ENCODE measurements at regions of chr5 and their contacts with region 1.

Region 1: GRCh38 chr5:142551338-142552067 is 134.4 kb downstream of the FGF1 start:
- DNase-seq: no peak
- ATAC-seq: no peak
- H3K4me3 Mint-ChIP-seq: no peak overlapping the region
- H3K27ac Mint-ChIP-seq: no peak overlapping the region
- H3K4me1 Mint-ChIP-seq: peaks cover 12% of the 10 kb centered on the region
- H3K27me3 Mint-ChIP-seq: peaks cover 29% of the 10 kb centered on the region
- CTCF ChIP-seq: no peak

Region 2: DNA sequence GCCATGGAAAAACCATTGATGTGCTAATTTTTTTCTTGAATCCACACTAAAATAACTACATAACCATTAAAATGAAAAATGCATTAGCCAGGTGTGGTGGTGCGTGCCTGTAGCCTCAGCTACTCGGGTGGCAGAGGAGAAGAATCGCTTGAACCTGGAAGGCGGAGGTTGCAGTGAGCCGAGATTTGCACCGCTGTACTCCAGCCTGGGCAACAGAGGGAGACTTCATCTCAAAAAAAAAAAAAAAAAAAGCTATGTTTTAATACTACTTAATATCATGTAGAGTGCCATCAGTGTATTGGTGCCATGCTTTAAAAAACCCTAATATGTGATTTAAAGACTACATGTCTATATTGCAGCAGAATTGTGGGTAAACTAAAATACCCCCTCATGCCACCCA is 384.0 kb before region 1 on chr5:
- CTCF ChIA-PET with region 1: no interaction called
- POLR2A ChIA-PET with region 1: no interaction called
- intact Hi-C with region 1: loop called (anchors 10 kb)
- DNase-seq: no peak
- ATAC-seq: no peak
- H3K4me3 Mint-ChIP-seq: no peak overlapping the region
- H3K27ac Mint-ChIP-seq: no peak overlapping the region
- H3K4me1 Mint-ChIP-seq: no peaks in the 10 kb centered on the region
- H3K27me3 Mint-ChIP-seq: no peaks in the 10 kb centered on the region
- CTCF ChIP-seq: no peak

Region 3: GRCh38 chr5:142263346-142263745 is 288.2 kb before region 1 on chr5:
- CTCF ChIA-PET with region 1: no interaction called
- POLR2A ChIA-PET with region 1: no interaction called
- intact Hi-C with region 1: no loop called
- DNase-seq: no peak
- ATAC-seq: no peak
- H3K4me3 Mint-ChIP-seq: no peak overlapping the region
- H3K27ac Mint-ChIP-seq: no peak overlapping the region
- H3K4me1 Mint-ChIP-seq: no peaks in the 10 kb centered on the region
- H3K27me3 Mint-ChIP-seq: no peaks in the 10 kb centered on the region
- CTCF ChIP-seq: no peak

Measured in activated CD8-positive, alpha-beta T cell treated with anti-CD3 and anti-CD28 coated beads for 36 hours (primary cell).